ENCODE measurements at regions of chr6 and their contacts with region 1.

Region 1: DNA sequence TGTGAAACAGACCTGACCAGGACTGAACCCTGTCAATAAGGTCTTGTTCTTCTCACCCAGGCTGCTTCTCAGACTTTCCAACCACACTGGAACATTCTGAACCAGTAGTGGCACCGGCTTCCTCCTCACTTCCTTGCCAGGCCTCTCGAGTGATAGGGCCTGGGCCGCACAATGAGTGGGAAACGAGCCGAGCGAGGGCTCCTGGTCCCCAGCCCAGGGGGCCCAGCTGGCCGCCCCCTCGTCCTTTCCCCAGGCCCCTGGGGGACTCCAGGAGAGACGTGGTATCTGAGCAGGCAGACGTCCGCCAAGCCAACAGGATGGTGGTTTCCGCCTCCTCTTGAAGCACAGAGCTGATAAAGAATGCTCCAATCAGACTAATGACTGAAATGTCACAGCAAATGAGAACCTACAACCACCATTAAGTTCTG is 117.9 kb downstream of the GMDS start:
- DNase-seq: peak; percentile 68 to 74
- ATAC-seq: peak; percentile 73 to 97 (median 90)
- H3K4me3 ChIP-seq: peak overlapping the region in 6 of 10 donors; percentile 17 to 44 (median 33)
- H3K27ac ChIP-seq: peak overlapping the region; percentile 13 to 78 (median 61)
- H3K4me1 ChIP-seq: peaks cover 0 to 34% (median 29%) of the 10 kb centered on the region in 9 donors
- H3K27me3 ChIP-seq: no peaks in the 10 kb centered on the region
- CTCF ChIP-seq: no peak

Region 2: GRCh38 chr6:781350-781961 is 1346.0 kb before region 1 on chr6:
- intact Hi-C with region 1: no loop called
- DNase-seq: no peak
- ATAC-seq: no peak
- H3K4me3 ChIP-seq: no peak overlapping the region
- H3K27ac ChIP-seq: no peak overlapping the region
- H3K4me1 ChIP-seq: no peaks in the 10 kb centered on the region
- H3K27me3 ChIP-seq: peaks cover 0 to 35% (median 10%) of the 10 kb centered on the region in 7 donors
- CTCF ChIP-seq: no peak

Region 3: GRCh38 chr6:2081155-2082138 is 46.1 kb before region 1 on chr6:
- intact Hi-C with region 1: no loop called
- DNase-seq: no peak
- ATAC-seq: no peak
- H3K4me3 ChIP-seq: no peak overlapping the region
- H3K27ac ChIP-seq: no peak overlapping the region
- H3K4me1 ChIP-seq: no peaks in the 10 kb centered on the region
- H3K27me3 ChIP-seq: no peaks in the 10 kb centered on the region
- CTCF ChIP-seq: no peak

Region 4: DNA sequence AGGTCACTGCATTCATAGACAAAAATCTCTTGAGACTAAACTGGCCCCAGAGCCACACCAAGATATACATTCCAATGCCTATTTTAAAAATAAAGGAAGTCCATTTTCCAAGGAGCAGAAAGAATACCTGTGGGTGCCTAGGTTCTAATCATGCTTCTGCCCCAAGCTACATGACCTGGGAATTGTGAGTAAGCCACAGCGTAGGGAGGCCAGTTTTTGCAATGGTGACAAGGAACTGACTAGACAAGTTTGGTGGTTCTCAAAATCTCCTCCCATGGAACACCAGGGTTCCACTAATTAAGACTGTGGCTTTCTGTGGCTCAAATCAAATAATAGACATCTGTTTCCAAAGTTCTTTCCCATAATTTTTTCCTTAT is 34.6 kb after region 1 on chr6:
- intact Hi-C with region 1: loop called in 2 of 10 experiments (anchors 5 kb)
- DNase-seq: no peak
- ATAC-seq: peak in 1 of 8 donors; percentile 31
- H3K4me3 ChIP-seq: no peak overlapping the region
- H3K27ac ChIP-seq: peak overlapping the region in 2 of 10 donors; percentile 28 to 48
- H3K4me1 ChIP-seq: peaks cover 0 to 27% (median 9%) of the 10 kb centered on the region in 9 donors
- H3K27me3 ChIP-seq: no peaks in the 10 kb centered on the region
- CTCF ChIP-seq: no peak

Region 5: DNA sequence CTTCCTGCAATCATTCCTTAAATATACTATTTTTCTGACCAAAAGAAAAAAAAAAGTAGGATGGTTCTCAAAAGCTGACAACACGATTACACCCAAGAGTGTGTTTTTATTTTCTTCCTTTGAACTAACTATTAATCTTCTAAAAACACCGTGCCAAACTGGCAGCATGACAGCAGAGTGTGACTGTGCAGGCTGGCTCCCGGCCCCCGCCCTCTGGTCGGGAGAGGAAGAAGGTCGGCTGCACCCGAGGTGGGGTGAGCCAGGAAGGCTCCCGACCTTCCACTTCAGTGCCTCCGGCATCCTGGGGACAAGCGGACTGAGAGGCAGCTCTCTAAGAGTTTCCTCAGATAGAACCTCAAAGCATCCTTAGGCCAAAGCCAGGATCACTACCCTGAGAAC is 1300.2 kb after region 1 on chr6:
- intact Hi-C with region 1: no loop called
- DNase-seq: no peak
- ATAC-seq: peak in 7 of 8 donors; percentile 38 to 70 (median 61)
- H3K4me3 ChIP-seq: no peak overlapping the region
- H3K27ac ChIP-seq: no peak overlapping the region
- H3K4me1 ChIP-seq: peaks cover 0 to 16% (median 7%) of the 10 kb centered on the region in 9 donors
- H3K27me3 ChIP-seq: peaks cover 0 to 3% (median 0%) of the 10 kb centered on the region in 7 donors
- CTCF ChIP-seq: no peak